ENCODE measurements at regions of chr19 and their contacts with region 1.

Region 1: DNA sequence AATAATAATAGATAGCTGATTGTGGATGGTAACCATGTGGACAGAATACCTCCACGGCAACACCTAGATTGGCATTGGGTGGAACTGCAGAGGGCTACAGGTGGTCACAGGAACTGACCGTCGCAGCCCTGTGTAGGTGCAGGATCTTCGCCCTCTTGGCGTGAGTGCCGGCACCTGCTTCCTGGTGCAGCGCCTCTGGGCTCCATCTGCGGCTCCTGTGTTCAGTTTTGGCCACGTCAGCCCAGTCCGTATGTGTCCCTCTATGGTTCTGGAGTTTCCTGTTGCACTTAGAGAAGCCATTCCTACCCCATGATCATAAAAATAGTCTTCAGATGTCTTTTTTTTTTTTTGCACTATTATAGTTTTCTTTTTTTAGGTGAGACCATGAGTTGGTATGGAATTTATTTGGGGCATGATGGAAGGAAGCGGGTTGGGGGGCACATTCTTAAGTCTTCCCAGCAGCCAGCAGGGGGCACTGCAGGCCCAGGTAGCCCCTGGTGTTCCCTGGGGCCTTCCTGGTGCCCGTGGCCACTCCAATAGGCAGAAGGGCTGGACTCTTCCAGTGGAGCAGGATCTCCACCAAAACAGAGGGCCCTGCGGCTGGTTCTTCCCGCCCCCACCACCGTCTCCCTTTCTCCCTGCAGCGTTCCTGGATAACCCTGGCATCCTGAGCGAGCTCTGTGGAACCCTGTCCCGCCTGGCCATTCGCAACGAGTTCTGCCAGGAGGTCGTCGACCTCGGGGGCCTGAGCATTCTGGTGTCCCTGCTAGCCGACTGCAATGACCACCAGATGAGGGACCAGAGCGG is 10.1 kb upstream of the SLC25A42 start:
- DNase-seq: no peak
- ATAC-seq: peak; percentile 80
- H3K4me3 ChIP-seq: no peak overlapping the region
- H3K27ac ChIP-seq: no peak overlapping the region
- H3K4me1 ChIP-seq: no peaks in the 10 kb centered on the region
- H3K27me3 ChIP-seq: no peaks in the 10 kb centered on the region
- CTCF ChIP-seq: peak; percentile 64 to 73 (median 66)
- EP300 ChIP-seq: no peak
- POLR2A ChIP-seq: no peak
- RAD21 ChIP-seq: peak; percentile 83

Region 2: DNA sequence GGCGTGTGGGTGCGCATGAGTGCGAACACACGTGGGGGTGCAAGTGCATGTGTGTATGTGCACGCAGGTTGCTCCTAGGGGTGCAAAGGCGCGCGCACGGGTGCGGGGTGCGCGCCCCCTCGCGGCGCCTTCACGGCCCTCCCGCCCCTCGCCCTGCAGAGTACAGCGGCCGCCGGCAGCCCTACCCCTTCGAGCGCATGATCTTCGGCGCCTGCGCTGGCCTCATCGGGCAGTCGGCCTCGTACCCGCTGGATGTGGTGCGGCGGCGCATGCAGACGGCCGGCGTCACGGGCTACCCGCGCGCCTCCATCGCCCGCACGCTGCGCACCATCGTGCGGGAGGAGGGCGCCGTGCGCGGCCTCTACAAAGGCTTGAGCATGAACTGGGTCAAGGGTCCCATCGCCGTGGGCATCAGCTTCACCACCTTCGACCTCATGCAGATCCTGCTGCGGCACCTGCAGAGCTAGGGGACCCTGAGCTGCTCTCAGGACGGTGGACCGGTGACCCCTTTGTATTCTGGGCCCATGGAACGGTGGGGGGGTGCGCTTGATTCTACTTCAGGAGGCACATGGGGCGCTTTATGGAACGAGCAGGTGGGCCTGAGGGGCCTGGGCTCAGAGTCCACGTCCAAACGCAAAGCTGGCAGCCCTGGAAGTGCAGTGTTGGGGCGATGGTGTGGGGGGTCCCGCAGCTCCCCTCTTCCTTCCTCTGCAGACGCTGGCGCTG is 56.9 kb after region 1 on chr19:
- CTCF ChIA-PET with region 1: interaction called, 14 read pairs
- POLR2A ChIA-PET with region 1: no interaction called
- RAD21 ChIA-PET with region 1: interaction called, 4 read pairs
- SMC1A ChIA-PET with region 1: interaction called, 6 read pairs
- in situ Hi-C with region 1: no loop called
- intact Hi-C with region 1: loop called (anchors 5 kb)
- DNase-seq: no peak
- ATAC-seq: peak; percentile 55
- H3K4me3 ChIP-seq: no peak overlapping the region
- H3K27ac ChIP-seq: no peak overlapping the region
- H3K4me1 ChIP-seq: no peaks in the 10 kb centered on the region
- H3K27me3 ChIP-seq: no peaks in the 10 kb centered on the region
- CTCF ChIP-seq: peak; percentile 27 to 35 (median 30); a peak in 4 of 6 replicates
- EP300 ChIP-seq: no peak
- POLR2A ChIP-seq: no peak
- RAD21 ChIP-seq: no peak

Region 3: GRCh38 chr19:19115954-19116353 is 62.2 kb after region 1 on chr19:
- CTCF ChIA-PET with region 1: interaction called, 14 read pairs
- POLR2A ChIA-PET with region 1: no interaction called
- RAD21 ChIA-PET with region 1: interaction called, 4 read pairs
- SMC1A ChIA-PET with region 1: interaction called, 6 read pairs
- in situ Hi-C with region 1: no loop called
- intact Hi-C with region 1: loop called (anchors 5 kb)
- DNase-seq: no peak
- ATAC-seq: peak; percentile 86
- H3K4me3 ChIP-seq: no peak overlapping the region
- H3K27ac ChIP-seq: no peak overlapping the region
- H3K4me1 ChIP-seq: no peaks in the 10 kb centered on the region
- H3K27me3 ChIP-seq: no peaks in the 10 kb centered on the region
- CTCF ChIP-seq: peak; percentile 39 to 71 (median 66)
- EP300 ChIP-seq: no peak
- POLR2A ChIP-seq: no peak
- RAD21 ChIP-seq: peak; percentile 41; the same call in 1 of the 2 replicates

Region 4: DNA sequence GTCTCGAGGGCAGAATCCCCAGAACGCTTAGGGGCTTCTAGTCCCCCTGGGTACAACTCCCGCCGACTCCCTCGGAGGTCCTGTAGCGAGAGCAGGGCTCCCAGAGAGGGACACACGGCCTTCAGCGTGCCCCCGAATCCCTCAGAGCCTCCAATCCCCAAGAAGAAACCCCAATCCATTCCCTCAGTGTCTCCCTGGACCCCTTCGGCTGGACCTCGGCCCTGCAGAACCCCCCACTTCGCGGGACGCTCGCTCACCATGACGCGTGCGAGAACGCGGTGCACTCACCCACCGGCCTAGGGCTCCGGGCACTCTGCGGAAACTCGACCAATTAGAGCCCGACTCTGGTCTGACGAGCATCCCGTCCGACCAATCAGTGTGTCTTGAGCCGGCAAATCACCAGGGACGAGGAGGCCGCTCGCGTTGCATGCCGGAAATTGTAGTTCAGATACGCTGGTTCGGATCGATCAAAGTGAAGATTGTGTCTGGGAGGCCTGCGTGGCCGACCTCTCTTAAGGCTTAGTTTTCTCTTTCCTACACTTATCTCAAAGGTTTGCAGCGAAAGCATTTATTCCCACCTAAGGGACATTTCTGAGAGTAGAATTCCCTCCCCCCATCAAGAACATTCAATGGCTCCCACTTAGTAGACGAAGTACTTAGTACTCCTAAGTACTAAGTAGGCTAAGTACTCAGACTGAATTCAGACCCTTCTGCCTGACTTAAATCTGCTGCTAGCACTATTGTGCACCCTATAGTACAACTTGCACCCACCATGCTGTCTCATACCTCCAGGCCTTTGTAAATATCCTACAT is 84.7 kb after region 1 on chr19 and contains the start of gene TMEM161A:
- CTCF ChIA-PET with region 1: interaction called, 12 read pairs
- POLR2A ChIA-PET with region 1: interaction called, 4 read pairs
- RAD21 ChIA-PET with region 1: interaction called, 3 read pairs
- SMC1A ChIA-PET with region 1: interaction called, 4 read pairs
- in situ Hi-C with region 1: loop called (anchors 5 kb)
- intact Hi-C with region 1: loop called (anchors 1 kb)
- DNase-seq: peak; percentile 98
- ATAC-seq: peak; percentile 100
- H3K4me3 ChIP-seq: peak within 1 kb of the TSS; percentile 77
- H3K27ac ChIP-seq: peak within 1 kb of the TSS; percentile 76
- H3K4me1 ChIP-seq: peaks cover 6% of the 10 kb centered on the region; the same call in 1 of the 2 replicates
- H3K27me3 ChIP-seq: no peaks in the 10 kb centered on the region
- CTCF ChIP-seq: no peak
- EP300 ChIP-seq: no peak
- POLR2A ChIP-seq: peak; percentile 90
- RAD21 ChIP-seq: no peak
- polyA plus RNA-seq, gene TMEM161A: 1.1 to 2.0 TPM